ENCODE measurements at regions of chr5 and their contacts with region 1.

Region 1: GRCh38 chr5:149834246-149834855 is 104.2 kb downstream of the PPARGC1B start:
- DNase-seq: peak; percentile 88 to 95 (median 90)
- H3K4me3 ChIP-seq: no peak overlapping the region
- H3K27ac ChIP-seq: no peak overlapping the region
- H3K4me1 ChIP-seq: no peaks in the 10 kb centered on the region
- H3K27me3 ChIP-seq: no peaks in the 10 kb centered on the region

Region 2: DNA sequence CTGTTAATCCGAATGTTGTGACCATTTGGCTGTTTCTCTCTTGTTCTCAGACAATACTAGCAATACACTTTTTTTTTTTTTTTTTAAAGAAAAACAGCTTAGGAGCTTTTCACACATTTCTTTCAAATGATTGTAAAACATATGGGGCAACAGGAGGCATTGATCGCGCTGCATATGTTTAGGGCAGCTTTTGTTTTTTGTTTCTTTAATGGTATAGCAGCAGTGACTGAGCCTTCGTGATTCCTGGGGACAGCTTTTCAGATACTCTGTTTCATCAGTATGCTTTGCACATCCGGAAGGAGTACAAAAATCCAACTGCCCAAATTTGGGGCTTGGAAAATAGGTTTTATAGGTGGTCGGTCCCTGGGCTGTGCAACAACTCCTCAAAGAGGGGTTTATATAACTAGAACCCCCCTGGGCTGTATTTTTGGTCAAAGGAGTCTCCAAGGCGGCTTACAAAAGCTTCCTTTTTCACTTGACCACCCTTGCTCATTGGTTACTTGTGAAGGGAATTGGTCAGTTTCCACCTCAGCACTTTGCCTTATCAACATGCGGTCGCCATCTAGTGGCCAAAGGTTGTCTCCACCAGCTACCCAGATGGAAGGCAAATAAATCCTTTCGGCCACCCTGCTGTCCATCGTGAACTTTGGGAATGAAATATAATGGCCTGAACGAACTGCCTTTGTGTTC is 18.4 kb after region 1 on chr5:
- CTCF ChIA-PET with region 1: interaction called, 208 read pairs
- POLR2A ChIA-PET with region 1: no interaction called
- DNase-seq: peak; percentile 18 to 47 (median 35)
- H3K4me3 ChIP-seq: no peak overlapping the region
- H3K27ac ChIP-seq: no peak overlapping the region
- H3K4me1 ChIP-seq: peaks cover 0 to 10% (median 6%) of the 10 kb centered on the region in 4 experiments
- H3K27me3 ChIP-seq: no peaks in the 10 kb centered on the region

Region 3: DNA sequence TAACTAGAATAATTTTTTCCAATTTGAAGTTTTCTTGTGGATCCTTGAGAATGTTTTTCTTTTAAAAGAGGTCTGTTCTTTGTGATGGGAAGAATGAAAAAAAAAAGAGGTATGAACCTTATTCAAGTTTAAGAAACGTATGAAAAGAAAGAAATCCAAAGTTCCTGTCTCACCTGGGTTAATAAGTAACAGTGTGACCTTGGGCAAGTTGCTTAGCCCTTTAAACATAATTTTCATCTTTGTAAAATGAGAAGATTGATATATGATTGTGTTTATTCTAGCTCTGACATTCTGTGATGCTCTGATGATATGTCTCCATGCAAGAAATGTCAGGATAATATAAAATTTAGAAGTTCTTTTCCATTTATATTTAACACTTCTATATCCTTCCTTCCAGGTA is 145.5 kb after region 1 on chr5:
- CTCF ChIA-PET with region 1: interaction called, 18 read pairs
- POLR2A ChIA-PET with region 1: no interaction called
- DNase-seq: no peak
- H3K4me3 ChIP-seq: no peak overlapping the region
- H3K27ac ChIP-seq: no peak overlapping the region
- H3K4me1 ChIP-seq: peaks cover 0 to 2% (median 0%) of the 10 kb centered on the region in 4 experiments
- H3K27me3 ChIP-seq: no peaks in the 10 kb centered on the region

Region 4: GRCh38 chr5:150000256-150000989 is 166.1 kb after region 1 on chr5 and contains the starts of genes HMGXB3 and TIGD6:
- CTCF ChIA-PET with region 1: interaction called, 21 read pairs
- POLR2A ChIA-PET with region 1: no interaction called
- DNase-seq: peak; percentile 93 to 98 (median 96)
- H3K4me3 ChIP-seq: peak within 1 kb of the TSS; percentile 82 to 93 (median 89)
- H3K27ac ChIP-seq: peak within 1 kb of the TSS; percentile 61 to 87
- H3K4me1 ChIP-seq: peaks cover 11 to 33% (median 30%) of the 10 kb centered on the region in 4 experiments
- H3K27me3 ChIP-seq: no peaks in the 10 kb centered on the region

Measured in common myeloid progenitor, CD34-positive (primary cell).